Lower leg skin (tissue), 4 donors: ENCODE measurements at regions of chr4 and their contacts with region 1.

Region 1: GRCh38 chr4:184343502-184344177 is 126.0 kb upstream of the ENPP6 start:
- DNase-seq: peak; percentile 62 to 92
- H3K4me3 ChIP-seq: peak overlapping the region; percentile 33
- CTCF ChIP-seq: no peak
- POLR2A ChIP-seq: no peak

Region 2: GRCh38 chr4:185332575-185333464 is 989.2 kb after region 1 on chr4:
- intact Hi-C with region 1: loop called (anchors 10 kb)
- DNase-seq: no peak
- H3K4me3 ChIP-seq: no peak overlapping the region
- CTCF ChIP-seq: no peak
- POLR2A ChIP-seq: no peak